MCF 10A (cell line): ENCODE measurements at regions of chr9 and their contacts with region 1.

Region 1: GRCh38 chr9:4862506-4863250 is 69.9 kb downstream of the RCL1 start:
- DNase-seq: no peak
- H3K4me3 Mint-ChIP-seq: no peak overlapping the region
- H3K27ac Mint-ChIP-seq: no peak overlapping the region
- H3K4me1 Mint-ChIP-seq: peaks cover 34% of the 10 kb centered on the region
- H3K27me3 Mint-ChIP-seq: no peaks in the 10 kb centered on the region
- CTCF ChIP-seq: no peak

Region 2: GRCh38 chr9:4464911-4465513 is 397.7 kb before region 1 on chr9:
- CTCF ChIA-PET with region 1: no interaction called
- POLR2A ChIA-PET with region 1: no interaction called
- intact Hi-C with region 1: no loop called
- DNase-seq: no peak
- H3K4me3 Mint-ChIP-seq: no peak overlapping the region
- H3K27ac Mint-ChIP-seq: no peak overlapping the region
- H3K4me1 Mint-ChIP-seq: no peaks in the 10 kb centered on the region
- H3K27me3 Mint-ChIP-seq: peaks cover 13% of the 10 kb centered on the region
- CTCF ChIP-seq: no peak

Region 3: DNA sequence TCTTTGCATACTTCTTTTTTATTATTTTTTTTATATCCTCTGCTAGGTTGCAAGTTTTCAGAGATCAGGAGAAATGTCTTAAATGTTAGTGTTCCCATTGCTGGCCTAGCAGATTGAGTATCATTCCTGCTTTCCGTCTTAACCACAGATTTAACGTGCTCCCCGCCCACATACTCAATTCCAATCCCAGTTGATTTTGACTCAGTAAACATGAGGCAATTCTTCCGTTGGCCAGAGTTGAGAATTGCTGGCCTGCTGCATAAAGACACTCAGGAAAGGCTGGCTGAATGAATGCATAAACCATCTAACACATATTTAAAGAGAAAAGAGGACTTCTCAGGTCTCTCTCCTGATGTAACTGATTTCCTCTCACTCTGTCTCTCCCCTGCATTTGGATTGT is 247.4 kb before region 1 on chr9:
- CTCF ChIA-PET with region 1: no interaction called
- POLR2A ChIA-PET with region 1: no interaction called
- intact Hi-C with region 1: no loop called
- DNase-seq: peak; percentile 45
- H3K4me3 Mint-ChIP-seq: no peak overlapping the region
- H3K27ac Mint-ChIP-seq: no peak overlapping the region
- H3K4me1 Mint-ChIP-seq: peaks cover 9% of the 10 kb centered on the region
- H3K27me3 Mint-ChIP-seq: no peaks in the 10 kb centered on the region
- CTCF ChIP-seq: no peak

Region 4: DNA sequence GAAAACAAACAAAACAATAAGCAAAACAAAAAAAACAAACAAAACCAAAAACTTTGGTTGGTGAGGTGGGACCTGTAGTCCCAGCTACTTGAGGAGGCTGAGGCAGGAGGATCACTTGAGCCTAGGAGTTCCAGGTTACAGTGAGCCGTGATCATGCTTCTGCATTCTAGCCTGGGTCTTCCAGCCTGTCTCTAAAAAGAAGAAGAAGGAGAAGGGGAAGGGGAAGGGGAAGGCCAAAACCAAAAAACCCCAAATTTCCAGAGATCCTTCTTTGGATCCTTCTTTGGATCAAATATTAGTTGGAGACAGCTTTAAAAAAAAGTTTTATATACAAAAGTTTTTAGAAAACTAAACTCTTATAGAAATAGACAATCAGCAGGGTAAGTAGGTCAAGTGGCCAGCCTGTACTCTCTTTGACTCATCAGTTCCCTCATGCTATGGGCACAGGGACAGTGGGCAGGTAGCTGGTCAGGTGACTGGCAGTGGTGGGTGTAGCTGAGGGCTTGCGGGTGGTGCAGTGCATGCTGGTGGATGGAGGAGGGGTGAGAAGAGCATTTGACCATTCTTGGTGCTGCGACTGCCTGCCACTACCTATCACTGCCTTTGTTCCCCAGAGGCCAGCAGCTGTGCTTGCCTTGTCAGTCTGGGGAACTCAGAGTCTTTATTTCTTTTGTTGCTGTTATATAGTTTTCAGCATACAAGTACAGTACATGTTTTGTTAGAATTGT is 57.3 kb before region 1 on chr9:
- CTCF ChIA-PET with region 1: no interaction called
- POLR2A ChIA-PET with region 1: no interaction called
- intact Hi-C with region 1: no loop called
- DNase-seq: no peak
- H3K4me3 Mint-ChIP-seq: no peak overlapping the region
- H3K27ac Mint-ChIP-seq: no peak overlapping the region
- H3K4me1 Mint-ChIP-seq: peaks cover 11% of the 10 kb centered on the region
- H3K27me3 Mint-ChIP-seq: no peaks in the 10 kb centered on the region
- CTCF ChIP-seq: no peak

Region 5: DNA sequence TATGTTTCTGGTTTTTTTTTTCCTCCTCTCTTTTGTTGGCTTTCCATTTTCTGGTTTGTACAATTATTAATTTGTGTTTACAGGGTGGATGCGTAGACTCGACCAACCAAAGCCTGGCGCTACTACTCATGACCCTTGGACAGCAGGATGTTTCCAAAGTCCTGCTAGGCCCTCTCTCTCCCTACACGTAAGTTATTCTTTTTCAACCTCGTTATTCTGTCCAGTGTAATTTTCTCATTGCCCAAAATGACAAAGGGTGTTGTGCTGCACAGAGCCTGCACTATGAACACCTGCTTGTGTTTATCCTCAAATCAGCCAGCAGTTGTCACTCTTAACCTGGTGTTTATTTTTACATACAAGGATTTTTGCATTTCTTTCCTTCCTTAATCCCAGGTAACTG is 13.3 kb before region 1 on chr9:
- CTCF ChIA-PET with region 1: interaction called, 13 read pairs
- POLR2A ChIA-PET with region 1: interaction called, 14 read pairs
- intact Hi-C with region 1: no loop called
- DNase-seq: no peak
- H3K4me3 Mint-ChIP-seq: no peak overlapping the region
- H3K27ac Mint-ChIP-seq: no peak overlapping the region
- H3K4me1 Mint-ChIP-seq: peaks cover 18% of the 10 kb centered on the region
- H3K27me3 Mint-ChIP-seq: no peaks in the 10 kb centered on the region
- CTCF ChIP-seq: no peak